ENCODE measurements at regions of chr2 and their contacts with region 1.

Region 1: DNA sequence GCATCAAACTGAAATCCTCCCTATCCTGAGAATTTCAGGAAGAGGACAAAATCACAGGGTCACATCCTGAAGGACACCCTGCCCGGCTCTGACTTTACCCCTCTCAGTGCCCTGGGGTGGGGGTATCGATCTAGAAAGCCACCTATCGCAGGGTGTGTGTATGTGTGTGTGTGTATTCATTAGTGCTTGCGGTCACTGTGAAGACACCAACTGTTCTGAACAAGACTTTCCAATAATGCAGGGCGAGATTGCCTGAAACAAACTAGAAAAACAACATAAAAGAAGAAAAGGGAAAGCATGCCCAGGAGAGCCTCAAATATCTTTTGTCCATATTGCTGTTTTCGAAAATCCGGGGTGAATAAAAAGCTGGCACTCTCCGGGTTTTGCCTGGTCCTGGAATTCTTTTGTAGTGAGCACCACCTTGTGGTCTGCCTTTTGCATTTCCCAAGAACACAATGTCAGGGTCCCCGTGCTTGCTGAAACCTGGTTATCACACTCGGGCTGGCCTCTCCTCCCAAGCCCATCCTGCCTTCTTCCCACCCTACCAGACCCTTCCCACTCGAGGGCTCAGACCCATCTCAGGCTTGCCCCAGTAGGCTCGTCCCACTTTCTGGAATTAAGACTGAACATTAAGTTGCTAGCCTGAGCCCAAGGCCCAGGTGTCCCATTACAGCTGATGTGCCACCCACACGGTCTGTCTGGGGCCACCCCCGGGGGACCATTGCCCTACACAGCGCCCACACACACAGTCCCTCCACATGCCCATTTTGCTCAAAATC is 25.0 kb upstream of the COPS8 start:
- DNase-seq: peak in 6 of 9 donors; percentile 15 to 34 (median 31)
- ATAC-seq: no peak
- H3K4me3 ChIP-seq: no peak overlapping the region
- H3K4me3 Mint-ChIP-seq: no peak overlapping the region
- H3K27ac ChIP-seq: no peak overlapping the region
- H3K27ac Mint-ChIP-seq: peak overlapping the region in 3 of 9 donors; percentile 22 to 70 (median 46)
- H3K4me1 ChIP-seq: no peaks in the 10 kb centered on the region
- H3K4me1 Mint-ChIP-seq: peaks cover 0 to 11% (median 0%) of the 10 kb centered on the region in 7 donors
- H3K27me3 ChIP-seq: no peaks in the 10 kb centered on the region
- H3K27me3 Mint-ChIP-seq: peaks cover 0 to 6% (median 0%) of the 10 kb centered on the region in 5 donors

Region 2: DNA sequence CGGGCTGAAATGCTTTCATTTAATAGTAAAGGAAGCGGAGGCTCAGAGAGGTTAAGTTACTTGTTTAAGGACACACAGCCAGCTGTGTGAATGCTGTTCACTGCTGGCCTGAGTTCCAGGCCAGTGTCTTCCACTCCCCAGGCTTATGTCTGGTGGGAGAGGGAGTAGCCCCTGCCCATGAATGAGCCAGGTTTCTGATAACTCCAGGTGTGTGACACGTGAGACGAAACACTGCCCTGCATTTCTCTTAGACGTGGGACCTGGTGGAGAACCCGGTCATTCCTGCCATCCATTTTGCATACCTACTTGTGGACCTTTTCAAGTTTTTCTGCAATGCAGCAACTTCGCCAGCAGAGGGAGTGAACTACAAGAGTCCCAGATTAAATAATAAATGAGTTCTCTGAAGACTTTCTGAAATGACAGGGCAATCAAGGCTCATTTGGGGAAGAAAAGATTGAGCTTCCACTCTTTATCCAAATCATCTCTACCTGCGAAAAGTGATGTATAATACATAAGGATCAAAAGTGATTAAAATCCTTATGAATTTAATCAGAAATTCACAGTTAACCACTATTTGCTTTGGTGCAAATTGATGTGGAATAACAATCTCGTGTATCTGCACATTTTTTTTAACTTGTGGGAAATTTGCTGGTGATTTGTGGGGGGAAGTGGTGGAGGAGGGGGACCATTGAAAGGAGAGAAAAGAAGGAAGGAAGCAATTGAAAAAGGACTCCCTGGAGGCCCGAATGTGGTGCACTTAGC is 717.1 kb before region 1 on chr2:
- CTCF ChIA-PET with region 1: no interaction called
- POLR2A ChIA-PET with region 1: no interaction called
- intact Hi-C with region 1: loop called in 1 of 2 experiments (anchors 1 kb)
- DNase-seq: peak in 7 of 9 donors; percentile 26 to 60 (median 50)
- ATAC-seq: peak; percentile 50
- H3K4me3 ChIP-seq: no peak overlapping the region
- H3K4me3 Mint-ChIP-seq: no peak overlapping the region
- H3K27ac ChIP-seq: no peak overlapping the region
- H3K27ac Mint-ChIP-seq: no peak overlapping the region
- H3K4me1 ChIP-seq: no peaks in the 10 kb centered on the region
- H3K4me1 Mint-ChIP-seq: no peaks in the 10 kb centered on the region
- H3K27me3 ChIP-seq: no peaks in the 10 kb centered on the region
- H3K27me3 Mint-ChIP-seq: peaks cover 0 to 6% (median 5%) of the 10 kb centered on the region in 5 donors

Region 3: DNA sequence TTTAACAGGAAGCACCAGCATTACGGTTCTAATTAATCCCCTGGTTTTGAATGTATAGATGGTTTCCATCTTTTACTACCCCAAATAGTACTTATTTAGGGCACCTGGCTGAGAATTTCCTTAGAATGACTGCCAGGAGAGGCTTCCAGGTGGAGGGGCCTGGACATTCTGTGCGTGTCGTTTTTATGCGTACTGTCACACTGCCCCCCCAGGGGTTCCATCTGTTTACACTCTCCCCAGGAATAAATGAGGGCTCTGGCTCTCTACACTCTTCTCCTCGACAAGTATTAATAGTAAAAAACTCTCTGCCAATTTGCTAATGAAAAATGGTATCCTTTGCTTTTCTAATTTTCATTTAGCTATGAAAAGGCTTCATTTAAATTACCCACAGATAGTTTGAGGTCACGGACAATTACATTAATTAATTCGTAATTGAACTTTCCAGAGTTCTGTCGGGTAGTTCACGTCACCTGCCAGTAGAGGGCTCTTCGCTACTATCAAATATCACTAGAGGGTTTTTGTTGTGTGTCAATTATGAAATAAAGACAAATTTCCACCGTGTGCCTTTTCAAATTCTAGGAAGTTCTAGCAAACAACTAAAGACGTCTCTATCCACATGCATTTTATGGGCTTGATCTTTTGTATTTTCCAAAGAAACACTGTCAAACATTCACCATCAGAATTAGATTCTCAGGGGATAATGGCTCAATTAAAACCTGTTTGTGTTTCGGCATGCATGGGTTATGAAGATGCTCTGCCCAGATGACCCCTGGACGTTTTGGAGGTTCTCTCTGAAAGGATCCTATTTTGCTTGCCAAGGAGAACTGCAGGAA is 707.7 kb before region 1 on chr2:
- CTCF ChIA-PET with region 1: no interaction called
- POLR2A ChIA-PET with region 1: no interaction called
- intact Hi-C with region 1: loop called in 1 of 2 experiments (anchors 1 kb)
- DNase-seq: peak in 5 of 9 donors; percentile 29 to 48 (median 45)
- ATAC-seq: peak; percentile 50
- H3K4me3 ChIP-seq: no peak overlapping the region
- H3K4me3 Mint-ChIP-seq: no peak overlapping the region
- H3K27ac ChIP-seq: no peak overlapping the region
- H3K27ac Mint-ChIP-seq: peak overlapping the region in 1 of 9 donors; percentile 59
- H3K4me1 ChIP-seq: no peaks in the 10 kb centered on the region
- H3K4me1 Mint-ChIP-seq: peaks cover 0 to 7% (median 4%) of the 10 kb centered on the region in 7 donors
- H3K27me3 ChIP-seq: no peaks in the 10 kb centered on the region
- H3K27me3 Mint-ChIP-seq: peaks cover 0 to 14% (median 8%) of the 10 kb centered on the region in 5 donors

Region 4: DNA sequence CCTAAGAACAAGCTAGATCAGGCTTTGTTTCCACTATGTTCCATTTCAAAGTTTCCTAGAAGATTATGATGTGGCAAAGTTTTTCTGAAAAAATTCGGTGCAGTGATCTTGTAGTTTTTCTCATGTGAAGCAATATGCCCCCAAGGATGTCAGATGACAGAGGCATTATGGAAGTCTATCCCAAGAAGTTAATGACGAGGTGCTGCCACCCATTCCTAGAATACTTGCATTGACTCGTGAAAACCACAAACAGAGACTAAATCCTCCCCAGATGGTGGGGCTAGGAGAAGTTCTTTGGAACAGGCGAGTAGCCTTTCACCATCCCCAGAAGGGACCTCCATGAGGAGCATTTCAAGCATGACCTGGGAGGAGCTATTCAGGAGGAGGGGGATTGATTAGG is 15.3 kb before region 1 on chr2:
- CTCF ChIA-PET with region 1: no interaction called
- POLR2A ChIA-PET with region 1: no interaction called
- intact Hi-C with region 1: no loop called
- DNase-seq: no peak
- ATAC-seq: no peak
- H3K4me3 ChIP-seq: no peak overlapping the region
- H3K4me3 Mint-ChIP-seq: no peak overlapping the region
- H3K27ac ChIP-seq: no peak overlapping the region
- H3K27ac Mint-ChIP-seq: peak overlapping the region in 1 of 9 donors; percentile 21
- H3K4me1 ChIP-seq: no peaks in the 10 kb centered on the region
- H3K4me1 Mint-ChIP-seq: no peaks in the 10 kb centered on the region
- H3K27me3 ChIP-seq: no peaks in the 10 kb centered on the region
- H3K27me3 Mint-ChIP-seq: peaks cover 0 to 16% (median 10%) of the 10 kb centered on the region in 5 donors

Measured in naive thymus-derived CD4-positive, alpha-beta T cell (primary cell).